ENCODE measurements at regions of chr9 and their contacts with region 1.

Region 1: DNA sequence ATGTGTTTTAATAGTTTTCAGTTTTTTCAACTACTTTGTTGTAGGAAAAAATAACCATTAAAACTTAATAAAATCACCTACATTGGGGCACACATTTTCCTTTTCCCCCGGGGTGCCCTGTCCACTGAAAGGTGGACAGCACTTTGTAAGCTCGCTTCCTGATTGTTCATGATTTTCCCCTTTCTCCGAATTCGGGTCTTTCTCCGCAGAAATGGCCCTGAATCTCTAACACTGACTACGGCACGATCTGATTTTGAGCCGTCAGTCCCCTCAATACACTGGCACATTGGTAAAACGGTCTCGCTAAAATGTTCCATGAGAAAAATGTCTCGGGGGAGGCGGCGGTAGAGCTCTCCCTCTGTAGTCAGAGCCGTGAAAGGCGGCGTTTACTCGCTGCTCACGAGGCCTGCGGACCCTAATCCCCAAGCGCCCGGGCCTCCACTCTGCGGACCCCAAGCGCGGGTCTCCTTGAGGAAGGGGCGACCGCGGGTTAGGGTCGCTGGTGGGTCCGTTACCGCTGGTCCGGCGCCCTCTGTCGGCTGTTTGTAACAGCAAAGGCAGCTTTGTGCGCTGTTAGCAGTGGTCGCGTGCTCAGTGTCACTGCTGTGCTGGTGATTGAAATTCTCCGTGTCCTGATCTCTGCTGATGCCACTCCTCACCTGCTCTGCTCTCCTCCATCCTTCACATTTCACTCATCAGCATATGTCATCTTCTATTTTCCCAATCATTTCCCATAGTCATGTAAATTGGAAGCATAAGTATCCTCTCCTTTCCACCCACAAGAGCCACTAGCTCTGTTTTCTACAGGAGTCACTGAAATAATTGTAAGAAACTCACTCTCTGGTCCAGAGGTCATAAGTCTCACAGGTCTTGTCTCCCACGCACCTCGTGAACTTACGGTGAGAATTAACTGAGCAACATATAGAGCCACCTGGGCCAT is 10.8 kb upstream of the IFNA2 start:
- DNase-seq: peak; percentile 72
- ATAC-seq: peak; percentile 74 to 87
- H3K4me3 ChIP-seq: peak overlapping the region; percentile 51
- H3K27ac ChIP-seq: no peak overlapping the region
- H3K4me1 ChIP-seq: peaks cover 11% of the 10 kb centered on the region
- H3K27me3 ChIP-seq: peaks cover 58% of the 10 kb centered on the region
- CTCF ChIP-seq: peak; percentile 87

Region 2: GRCh38 chr9:21326526-21327139 is 69.4 kb before region 1 on chr9:
- intact Hi-C with region 1: loop called (anchors 10 kb)
- DNase-seq: no peak
- ATAC-seq: peak; percentile 66 to 81
- H3K4me3 ChIP-seq: no peak overlapping the region
- H3K27ac ChIP-seq: no peak overlapping the region
- H3K4me1 ChIP-seq: peaks cover 51% of the 10 kb centered on the region
- H3K27me3 ChIP-seq: no peaks in the 10 kb centered on the region
- CTCF ChIP-seq: peak; percentile 68